ENCODE measurements at regions of chrX and their contacts with region 1.

Region 1: GRCh38 chrX:153971450-153972367 is at the start of gene HCFC1:
- DNase-seq: peak; percentile 87
- H3K4me3 Mint-ChIP-seq: peak within 1 kb of the TSS; percentile 100
- H3K27ac Mint-ChIP-seq: peak within 1 kb of the TSS; percentile 100
- H3K4me1 Mint-ChIP-seq: peaks cover 37% of the 10 kb centered on the region
- H3K27me3 Mint-ChIP-seq: no peaks in the 10 kb centered on the region
- total RNA-seq, gene HCFC1: 105 and 106 TPM in 2 replicates

Region 2: DNA sequence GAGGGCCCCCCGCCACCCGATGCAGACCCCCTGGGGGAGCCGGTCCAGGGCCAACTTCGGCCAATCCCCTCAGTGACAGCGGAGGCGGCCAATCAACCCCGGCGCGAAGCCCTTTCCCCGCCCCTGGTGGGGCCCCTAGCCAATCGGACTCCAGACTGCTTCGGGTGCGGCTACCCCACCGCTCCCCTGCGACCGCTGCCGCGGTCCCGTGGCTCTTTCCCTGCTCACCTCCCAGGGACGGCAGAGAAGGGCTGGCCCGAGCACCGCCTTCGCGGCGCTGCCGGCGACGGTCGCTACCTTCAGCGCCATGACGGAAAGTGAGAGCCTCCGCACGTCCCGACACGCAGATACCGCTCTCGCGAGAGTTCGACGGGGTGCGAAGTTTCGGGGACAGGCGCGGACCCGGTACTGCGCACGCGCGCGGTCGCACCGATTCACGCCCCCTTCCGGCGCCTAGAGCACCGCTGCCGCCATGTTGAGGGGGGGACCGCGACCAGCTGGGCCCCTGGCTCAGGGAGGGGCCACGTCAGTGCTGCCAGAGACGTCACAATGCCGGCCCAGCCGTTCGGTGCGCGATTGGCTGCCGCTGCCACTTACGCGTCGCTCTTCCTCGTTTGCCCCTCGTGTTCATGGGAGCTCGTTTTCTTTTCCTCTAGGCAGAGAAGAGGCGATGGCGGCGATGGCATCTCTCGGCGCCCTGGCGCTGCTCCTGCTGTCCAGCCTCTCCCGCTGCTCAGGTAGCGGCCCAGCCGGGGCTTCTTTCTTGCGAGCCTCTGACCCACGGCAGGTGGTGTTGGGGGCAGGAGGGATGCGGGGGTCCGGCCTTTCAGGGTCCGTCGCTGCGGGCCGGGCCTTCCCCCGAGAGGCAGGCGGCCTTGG is 177.5 kb before region 1 on chrX and contains the starts of genes IDH3G and SSR4:
- intact Hi-C with region 1: loop called (anchors 1 kb)
- DNase-seq: peak; percentile 91
- H3K4me3 Mint-ChIP-seq: peak within 1 kb of the TSS; percentile 96
- H3K27ac Mint-ChIP-seq: peak within 1 kb of the TSS; percentile 94
- H3K4me1 Mint-ChIP-seq: peaks cover 18% of the 10 kb centered on the region
- H3K27me3 Mint-ChIP-seq: no peaks in the 10 kb centered on the region
- total RNA-seq, gene IDH3G: 68.4 and 69.7 TPM in 2 replicates
- total RNA-seq, gene SSR4: 281 and 285 TPM in 2 replicates

Region 3: GRCh38 chrX:153953342-153953830 is 18.3 kb before region 1 on chrX:
- intact Hi-C with region 1: loop called (anchors 1 kb)
- DNase-seq: peak; percentile 60
- H3K4me3 Mint-ChIP-seq: no peak overlapping the region
- H3K27ac Mint-ChIP-seq: peak overlapping the region; percentile 23
- H3K4me1 Mint-ChIP-seq: no peaks in the 10 kb centered on the region
- H3K27me3 Mint-ChIP-seq: no peaks in the 10 kb centered on the region

Region 4: GRCh38 chrX:154097597-154098541 is 126.2 kb after region 1 on chrX and contains the start of gene MECP2:
- intact Hi-C with region 1: loop called (anchors 1 kb)
- DNase-seq: peak; percentile 84
- H3K4me3 Mint-ChIP-seq: peak within 1 kb of the TSS; percentile 97
- H3K27ac Mint-ChIP-seq: peak within 1 kb of the TSS; percentile 99
- H3K4me1 Mint-ChIP-seq: peaks cover 54% of the 10 kb centered on the region
- H3K27me3 Mint-ChIP-seq: no peaks in the 10 kb centered on the region
- total RNA-seq, gene MECP2: 53.4 and 59.4 TPM in 2 replicates

Region 5: DNA sequence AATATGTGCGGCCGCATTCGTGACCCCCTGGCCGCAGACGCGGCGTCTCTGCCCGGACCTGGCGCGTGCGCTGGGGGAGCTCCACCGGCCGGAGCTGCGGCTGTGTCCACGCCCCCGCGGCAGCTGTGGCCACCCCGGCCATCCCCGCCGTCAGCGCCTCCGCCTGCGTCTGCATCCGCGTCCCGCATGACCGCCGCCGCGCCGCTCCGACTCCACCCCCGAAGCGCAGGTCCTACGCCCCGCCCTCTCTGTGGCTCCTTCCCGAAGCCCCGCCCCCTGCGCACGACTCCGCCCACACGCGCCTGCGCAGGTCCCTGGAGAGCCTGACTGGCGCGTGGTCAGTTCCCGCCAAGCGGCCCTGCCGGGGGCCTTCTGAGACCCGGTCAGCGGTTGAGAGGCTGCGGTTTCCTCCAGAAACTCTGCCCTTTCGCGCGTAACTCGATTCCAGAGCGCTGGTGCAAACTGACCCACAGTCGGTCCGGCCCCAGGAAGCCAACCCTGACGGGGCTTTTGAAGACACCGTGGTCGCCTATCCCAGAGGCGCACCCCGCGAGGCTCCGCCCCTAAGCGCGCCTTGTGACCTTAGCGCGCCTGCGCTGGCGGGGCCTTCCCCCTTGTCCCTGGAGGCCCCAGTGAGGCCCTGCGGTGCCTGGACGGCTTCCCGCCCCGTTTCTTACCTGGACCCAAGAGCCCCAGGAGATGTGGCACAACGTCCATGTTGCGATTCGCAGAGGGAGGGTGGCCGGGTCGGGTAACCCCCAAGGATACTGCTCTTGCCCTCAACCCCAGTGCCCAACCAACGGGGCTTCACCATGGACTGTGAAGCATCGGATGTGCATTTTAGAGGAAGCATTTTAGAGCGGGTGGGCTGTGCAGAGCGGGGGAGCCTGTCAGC is 507.3 kb after region 1 on chrX and contains the start of gene LAGE3:
- intact Hi-C with region 1: loop called (anchors 2 kb)
- DNase-seq: peak; percentile 93
- H3K4me3 Mint-ChIP-seq: peak within 1 kb of the TSS; percentile 88
- H3K27ac Mint-ChIP-seq: peak within 1 kb of the TSS; percentile 91
- H3K4me1 Mint-ChIP-seq: peaks cover 23% of the 10 kb centered on the region
- H3K27me3 Mint-ChIP-seq: no peaks in the 10 kb centered on the region
- total RNA-seq, gene LAGE3: 60.3 and 63.2 TPM in 2 replicates

Measured in activated T-helper 1 cell treated with anti-CD3 and anti-CD28 coated beads, Interleukin-12 subunit alpha, Interleukin-12 subunit beta, Interleukin-2, Interleukin-4 antibody, amounts not matched to agents 30 ng/mL and 10 ng/mL and 1 ng/mL, durations not matched to agents 14 hours and 24 hours and 36 hours (primary cell).